MCF 10A (cell line): ENCODE measurements at regions of chr1 and their contacts with region 1.

Region 1: GRCh38 chr1:160261893-160262794 is at the start of gene DCAF8:
- DNase-seq: peak; percentile 99
- H3K4me3 Mint-ChIP-seq: peak within 1 kb of the TSS; percentile 97
- H3K27ac Mint-ChIP-seq: peak within 1 kb of the TSS; percentile 100
- H3K4me1 Mint-ChIP-seq: peaks cover 28% of the 10 kb centered on the region
- H3K27me3 Mint-ChIP-seq: peaks cover 8% of the 10 kb centered on the region
- CTCF ChIP-seq: no peak
- total RNA-seq, gene DCAF8: 181 and 208 TPM in 2 replicates

Region 2: GRCh38 chr1:160124705-160125478 is 137.3 kb before region 1 on chr1:
- CTCF ChIA-PET with region 1: interaction called, 4 read pairs
- POLR2A ChIA-PET with region 1: interaction called, 11 read pairs
- intact Hi-C with region 1: no loop called
- DNase-seq: peak; percentile 94
- H3K4me3 Mint-ChIP-seq: no peak overlapping the region
- H3K27ac Mint-ChIP-seq: peak overlapping the region; percentile 93
- H3K4me1 Mint-ChIP-seq: peaks cover 41% of the 10 kb centered on the region
- H3K27me3 Mint-ChIP-seq: no peaks in the 10 kb centered on the region
- CTCF ChIP-seq: peak; percentile 36

Region 3: DNA sequence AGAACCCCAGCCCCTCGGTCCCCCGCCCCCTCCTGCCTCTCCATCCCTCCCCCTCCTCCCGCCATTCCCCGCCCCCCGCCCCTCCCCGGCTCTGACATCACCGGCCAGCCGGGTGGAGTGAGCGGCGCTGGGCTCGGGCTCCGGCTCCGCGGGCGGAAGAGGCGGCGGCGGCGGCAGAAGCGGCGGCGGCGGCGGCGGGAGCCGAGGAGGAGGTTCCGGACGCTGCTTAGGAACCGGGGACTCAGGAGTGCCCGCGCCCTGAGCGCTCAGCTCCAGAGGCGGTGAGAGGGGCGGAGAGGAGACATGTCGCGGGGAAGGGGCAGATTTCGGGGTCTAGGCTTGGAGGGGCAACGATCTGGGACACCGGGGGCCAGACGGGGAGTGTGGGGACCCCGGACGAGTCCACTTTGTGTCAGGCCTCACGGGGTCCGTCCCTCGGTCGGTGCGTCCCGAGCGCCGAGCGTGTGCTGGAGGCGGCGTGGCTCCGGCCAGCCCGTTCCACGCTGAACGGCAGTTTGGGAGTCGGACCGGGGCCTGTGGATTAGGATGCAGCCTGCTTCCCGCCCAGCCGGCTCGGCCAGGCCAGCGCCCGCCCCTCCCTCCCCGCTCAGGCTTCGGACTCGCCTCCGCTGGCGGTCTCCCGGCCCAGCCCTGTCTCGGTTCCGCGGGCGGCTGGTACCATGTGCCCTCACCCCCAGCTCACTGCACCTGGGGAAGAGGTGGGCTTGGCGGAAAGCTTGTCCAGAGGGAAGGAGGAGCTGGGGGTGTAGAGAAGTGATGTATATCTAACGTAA is 56.7 kb before region 1 on chr1 and contains the start of gene PEA15:
- CTCF ChIA-PET with region 1: interaction called, 3 read pairs
- POLR2A ChIA-PET with region 1: interaction called, 29 read pairs
- intact Hi-C with region 1: no loop called
- DNase-seq: peak; percentile 75
- H3K4me3 Mint-ChIP-seq: peak within 1 kb of the TSS; percentile 82
- H3K27ac Mint-ChIP-seq: peak within 1 kb of the TSS; percentile 17
- H3K4me1 Mint-ChIP-seq: peaks cover 25% of the 10 kb centered on the region
- H3K27me3 Mint-ChIP-seq: no peaks in the 10 kb centered on the region
- CTCF ChIP-seq: no peak
- total RNA-seq, gene PEA15: 183 and 198 TPM in 2 replicates

Region 4: GRCh38 chr1:160232911-160233310 is 29.2 kb before region 1 on chr1:
- CTCF ChIA-PET with region 1: interaction called, 4 read pairs
- POLR2A ChIA-PET with region 1: interaction called, 10 read pairs
- intact Hi-C with region 1: no loop called
- DNase-seq: no peak
- H3K4me3 Mint-ChIP-seq: no peak overlapping the region
- H3K27ac Mint-ChIP-seq: peak overlapping the region; percentile 0
- H3K4me1 Mint-ChIP-seq: no peaks in the 10 kb centered on the region
- H3K27me3 Mint-ChIP-seq: no peaks in the 10 kb centered on the region
- CTCF ChIP-seq: no peak

Region 5: DNA sequence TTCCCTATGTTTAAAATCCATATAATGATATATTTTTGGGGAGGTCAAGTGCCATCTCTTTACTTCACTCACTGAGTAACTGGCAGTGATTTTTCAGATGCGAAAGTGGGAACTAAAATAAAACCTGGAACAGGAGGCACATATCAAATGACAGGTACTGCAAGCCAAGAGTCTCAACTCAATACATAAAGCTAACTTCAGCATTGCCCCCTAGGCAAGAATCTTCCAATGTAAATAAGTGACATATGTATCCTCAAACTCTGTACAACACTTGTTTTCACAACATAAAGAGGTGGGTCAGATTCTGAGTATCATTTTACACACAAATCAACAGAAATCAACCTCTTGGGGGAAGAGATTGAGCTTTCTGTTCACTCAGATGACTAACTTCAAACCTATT is 17.9 kb before region 1 on chr1:
- CTCF ChIA-PET with region 1: interaction called, 4 read pairs
- POLR2A ChIA-PET with region 1: interaction called, 51 read pairs
- intact Hi-C with region 1: no loop called
- DNase-seq: no peak
- H3K4me3 Mint-ChIP-seq: no peak overlapping the region
- H3K27ac Mint-ChIP-seq: no peak overlapping the region
- H3K4me1 Mint-ChIP-seq: peaks cover 7% of the 10 kb centered on the region
- H3K27me3 Mint-ChIP-seq: no peaks in the 10 kb centered on the region
- CTCF ChIP-seq: no peak

Region 6: GRCh38 chr1:160277330-160277729 is 15.2 kb after region 1 on chr1:
- CTCF ChIA-PET with region 1: interaction called, 9 read pairs
- POLR2A ChIA-PET with region 1: interaction called, 247 read pairs
- intact Hi-C with region 1: no loop called
- DNase-seq: no peak
- H3K4me3 Mint-ChIP-seq: no peak overlapping the region
- H3K27ac Mint-ChIP-seq: no peak overlapping the region
- H3K4me1 Mint-ChIP-seq: no peaks in the 10 kb centered on the region
- H3K27me3 Mint-ChIP-seq: no peaks in the 10 kb centered on the region
- CTCF ChIP-seq: no peak

Region 7: GRCh38 chr1:160354388-160354985 is 92.3 kb after region 1 on chr1:
- CTCF ChIA-PET with region 1: no interaction called
- POLR2A ChIA-PET with region 1: no interaction called
- intact Hi-C with region 1: no loop called
- DNase-seq: peak; percentile 39
- H3K4me3 Mint-ChIP-seq: no peak overlapping the region
- H3K27ac Mint-ChIP-seq: no peak overlapping the region
- H3K4me1 Mint-ChIP-seq: no peaks in the 10 kb centered on the region
- H3K27me3 Mint-ChIP-seq: no peaks in the 10 kb centered on the region
- CTCF ChIP-seq: peak; percentile 46

Region 8: DNA sequence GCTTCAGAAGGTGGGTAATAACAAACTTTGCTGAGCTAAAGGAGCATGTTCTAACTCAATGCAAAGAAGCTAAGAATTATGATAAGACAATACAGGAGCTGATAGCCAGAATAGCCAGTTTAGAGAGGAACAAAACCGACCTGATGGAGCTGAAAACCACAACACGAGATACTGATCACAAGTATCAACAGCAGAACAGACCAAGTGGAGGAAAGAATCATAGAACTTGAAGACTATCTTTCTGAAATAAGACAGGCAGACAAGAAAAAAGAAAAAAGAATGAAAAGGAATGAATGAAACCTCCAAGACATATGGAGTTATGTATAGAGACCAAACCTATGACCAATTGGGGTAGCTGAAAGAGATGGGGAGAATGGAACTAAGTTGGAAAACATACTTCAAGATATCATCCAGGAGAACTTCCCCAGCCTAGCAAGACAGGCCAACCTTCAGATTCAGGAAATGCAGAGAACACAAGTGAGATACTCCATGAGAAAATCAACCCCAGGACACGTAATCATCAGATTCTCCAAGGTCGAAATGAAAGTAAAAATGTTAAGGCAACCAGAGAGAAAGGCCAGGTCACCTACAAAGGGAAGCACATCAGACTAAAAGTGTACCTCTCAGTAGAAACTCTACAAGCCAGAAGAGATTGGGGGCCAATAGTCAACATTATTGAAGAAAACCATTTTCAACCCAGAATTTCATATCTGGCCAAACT is 296.7 kb after region 1 on chr1:
- CTCF ChIA-PET with region 1: no interaction called
- POLR2A ChIA-PET with region 1: no interaction called
- intact Hi-C with region 1: no loop called
- DNase-seq: no peak
- H3K4me3 Mint-ChIP-seq: no peak overlapping the region
- H3K27ac Mint-ChIP-seq: no peak overlapping the region
- H3K4me1 Mint-ChIP-seq: peaks cover 8% of the 10 kb centered on the region
- H3K27me3 Mint-ChIP-seq: peaks cover 73% of the 10 kb centered on the region
- CTCF ChIP-seq: no peak